ENCODE measurements at regions of chr10 and their contacts with region 1.

Region 1: DNA sequence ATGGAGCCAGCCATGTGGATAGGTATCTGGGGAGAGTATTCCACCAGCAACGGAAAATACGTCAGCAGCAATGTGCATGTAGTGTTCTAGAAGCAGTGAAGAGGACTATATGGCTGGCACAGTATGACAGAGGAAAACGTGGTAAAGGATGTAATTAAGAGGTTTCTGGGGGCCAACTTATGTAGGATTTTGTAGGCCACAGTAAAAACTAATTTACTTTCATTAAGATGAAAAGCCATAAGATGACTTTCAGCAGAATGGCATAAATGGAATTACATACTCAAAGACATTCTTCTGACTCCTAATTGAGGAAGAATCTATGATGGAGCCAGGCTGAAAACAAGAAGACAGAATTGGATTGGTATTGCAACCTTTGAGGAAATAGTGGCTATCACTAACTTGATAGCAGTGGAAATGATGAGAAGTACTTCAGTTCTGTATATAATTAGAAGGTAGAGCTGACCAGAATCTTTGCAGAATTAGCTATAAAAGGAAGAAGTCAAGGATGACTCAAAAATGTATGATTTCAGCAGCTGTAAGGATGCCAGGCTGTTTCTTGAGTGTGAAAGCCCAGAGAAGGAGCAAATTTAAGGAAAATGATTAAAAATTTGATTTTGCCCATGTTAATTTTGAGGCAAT is 156.7 kb downstream of the MBL2 start:
- DNase-seq: no peak
- ATAC-seq: no peak
- H3K4me3 ChIP-seq: no peak overlapping the region
- H3K27ac ChIP-seq: no peak overlapping the region
- H3K4me1 ChIP-seq: no peaks in the 10 kb centered on the region
- H3K27me3 ChIP-seq: no peaks in the 10 kb centered on the region
- CTCF ChIP-seq: no peak

Region 2: GRCh38 chr10:51358227-51358626 is 1257.6 kb before region 1 on chr10:
- intact Hi-C with region 1: loop called in 1 of 2 experiments (anchors 5 kb)
- DNase-seq: no peak
- ATAC-seq: no peak
- H3K4me3 ChIP-seq: no peak overlapping the region
- H3K27ac ChIP-seq: no peak overlapping the region
- H3K4me1 ChIP-seq: no peaks in the 10 kb centered on the region
- H3K27me3 ChIP-seq: no peaks in the 10 kb centered on the region
- CTCF ChIP-seq: no peak